Sigmoid colon (tissue), 7 donors: ENCODE measurements at regions of chr6 and their contacts with region 1.

Region 1: GRCh38 chr6:133923938-133924593 is 29.0 kb upstream of the TBPL1 start:
- DNase-seq: peak; percentile 74
- H3K4me3 ChIP-seq: no peak overlapping the region
- H3K27ac ChIP-seq: no peak overlapping the region
- H3K4me1 ChIP-seq: no peaks in the 10 kb centered on the region
- H3K27me3 ChIP-seq: peaks cover 0 to 16% (median 0%) of the 10 kb centered on the region in 3 donors
- CTCF ChIP-seq: peak; percentile 63 to 81 (median 80)
- EP300 ChIP-seq: no peak
- POLR2A ChIP-seq: no peak

Region 2: GRCh38 chr6:132887204-132887603 is 1036.9 kb before region 1 on chr6:
- intact Hi-C with region 1: no loop called
- DNase-seq: no peak
- H3K4me3 ChIP-seq: no peak overlapping the region
- H3K27ac ChIP-seq: no peak overlapping the region
- H3K4me1 ChIP-seq: no peaks in the 10 kb centered on the region
- H3K27me3 ChIP-seq: no peaks in the 10 kb centered on the region
- CTCF ChIP-seq: no peak
- EP300 ChIP-seq: no peak
- POLR2A ChIP-seq: no peak

Region 3: GRCh38 chr6:133959667-133960368 is 35.8 kb after region 1 on chr6:
- intact Hi-C with region 1: no loop called
- DNase-seq: no peak
- H3K4me3 ChIP-seq: no peak overlapping the region
- H3K27ac ChIP-seq: no peak overlapping the region
- H3K4me1 ChIP-seq: peaks cover 0 to 18% (median 8%) of the 10 kb centered on the region in 4 donors
- H3K27me3 ChIP-seq: no peaks in the 10 kb centered on the region
- CTCF ChIP-seq: no peak
- EP300 ChIP-seq: no peak
- POLR2A ChIP-seq: no peak

Region 4: GRCh38 chr6:133973109-133973971 is 49.3 kb after region 1 on chr6:
- intact Hi-C with region 1: loop called (anchors 2 kb)
- DNase-seq: no peak
- H3K4me3 ChIP-seq: no peak overlapping the region
- H3K27ac ChIP-seq: peak overlapping the region in 3 of 4 donors; percentile 4 to 17 (median 5)
- H3K4me1 ChIP-seq: peaks cover 0 to 19% (median 17%) of the 10 kb centered on the region in 4 donors
- H3K27me3 ChIP-seq: no peaks in the 10 kb centered on the region
- CTCF ChIP-seq: peak; percentile 43 to 69 (median 68)
- EP300 ChIP-seq: no peak
- POLR2A ChIP-seq: no peak

Region 5: DNA sequence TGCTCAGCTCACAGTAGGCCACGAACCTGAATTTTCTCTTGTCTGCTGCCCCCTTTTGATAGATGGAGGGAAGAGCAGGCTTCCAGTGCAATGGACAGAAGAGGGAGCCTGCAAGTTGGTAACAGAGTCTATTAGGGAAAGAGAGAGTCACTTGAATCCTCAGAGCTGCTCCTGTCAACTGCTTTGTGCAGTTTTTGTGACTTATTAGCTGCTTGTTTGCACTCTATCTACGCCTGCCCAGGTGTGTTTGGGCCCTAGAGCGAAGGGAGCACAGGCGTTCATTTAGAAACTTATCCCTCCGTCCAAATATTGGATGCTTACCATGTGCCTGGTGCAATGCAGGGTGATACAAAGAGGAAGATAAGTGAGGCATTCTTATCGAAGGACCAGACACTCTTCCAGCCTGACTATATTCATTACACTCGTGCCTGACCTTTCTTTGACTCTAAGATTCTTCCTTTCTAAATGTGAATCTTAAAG is 139.9 kb after region 1 on chr6:
- intact Hi-C with region 1: loop called (anchors 1 kb)
- DNase-seq: peak; percentile 79
- H3K4me3 ChIP-seq: no peak overlapping the region
- H3K27ac ChIP-seq: peak overlapping the region in 3 of 4 donors; percentile 50 to 76 (median 64)
- H3K4me1 ChIP-seq: peaks cover 0 to 34% (median 23%) of the 10 kb centered on the region in 4 donors
- H3K27me3 ChIP-seq: no peaks in the 10 kb centered on the region
- CTCF ChIP-seq: peak; percentile 59 to 83 (median 76)
- EP300 ChIP-seq: no peak
- POLR2A ChIP-seq: no peak

Region 6: GRCh38 chr6:134669485-134669884 is 745.4 kb after region 1 on chr6:
- intact Hi-C with region 1: no loop called
- DNase-seq: no peak
- H3K4me3 ChIP-seq: no peak overlapping the region
- H3K27ac ChIP-seq: no peak overlapping the region
- H3K4me1 ChIP-seq: no peaks in the 10 kb centered on the region
- H3K27me3 ChIP-seq: no peaks in the 10 kb centered on the region
- CTCF ChIP-seq: no peak
- EP300 ChIP-seq: no peak
- POLR2A ChIP-seq: no peak

Region 7: GRCh38 chr6:134882426-134883038 is 958.5 kb after region 1 on chr6:
- intact Hi-C with region 1: loop called (anchors 5 kb)
- DNase-seq: peak; percentile 78
- H3K4me3 ChIP-seq: no peak overlapping the region
- H3K27ac ChIP-seq: no peak overlapping the region
- H3K4me1 ChIP-seq: no peaks in the 10 kb centered on the region
- H3K27me3 ChIP-seq: peaks cover 0 to 12% (median 0%) of the 10 kb centered on the region in 3 donors
- CTCF ChIP-seq: peak; percentile 46 to 90 (median 87)
- EP300 ChIP-seq: no peak
- POLR2A ChIP-seq: no peak